Natural killer cell (primary cell): ENCODE measurements at regions of chr9 and their contacts with region 1.

Region 1: GRCh38 chr9:20593551-20593950 is 28.7 kb downstream of the MLLT3 start:
- DNase-seq: no peak
- ATAC-seq: no peak
- H3K4me3 ChIP-seq: no peak overlapping the region
- H3K4me3 Mint-ChIP-seq: no peak overlapping the region
- H3K27ac ChIP-seq: no peak overlapping the region
- H3K27ac Mint-ChIP-seq: no peak overlapping the region
- H3K4me1 ChIP-seq: no peaks in the 10 kb centered on the region
- H3K4me1 Mint-ChIP-seq: peaks cover 32 to 40% of the 10 kb centered on the region in 2 donors
- H3K27me3 ChIP-seq: no peaks in the 10 kb centered on the region
- H3K27me3 Mint-ChIP-seq: no peaks in the 10 kb centered on the region
- CTCF ChIP-seq: no peak

Region 2: DNA sequence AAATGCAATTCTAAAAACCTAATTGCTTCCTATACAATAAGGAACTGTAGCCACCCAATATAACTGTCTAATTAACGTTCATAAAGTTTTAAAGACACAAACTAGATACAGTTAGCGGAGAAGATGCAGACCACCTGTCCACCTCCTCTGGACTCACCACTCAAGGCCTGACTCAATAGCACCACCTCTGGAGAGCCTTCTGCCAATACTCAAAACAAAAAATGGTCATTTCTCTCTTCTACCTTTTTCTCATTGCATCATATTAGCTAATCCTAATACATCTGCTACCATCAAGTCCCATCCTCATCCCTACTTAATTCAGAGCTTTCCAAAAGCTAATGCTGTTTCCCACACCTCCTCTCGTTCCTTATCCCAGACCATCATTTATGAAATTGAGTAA is 131.1 kb before region 1 on chr9:
- intact Hi-C with region 1: loop called (anchors 10 kb)
- DNase-seq: no peak
- ATAC-seq: no peak
- H3K4me3 ChIP-seq: no peak overlapping the region
- H3K4me3 Mint-ChIP-seq: no peak overlapping the region
- H3K27ac ChIP-seq: no peak overlapping the region
- H3K27ac Mint-ChIP-seq: no peak overlapping the region
- H3K4me1 ChIP-seq: no peaks in the 10 kb centered on the region
- H3K4me1 Mint-ChIP-seq: peaks cover 35 to 60% of the 10 kb centered on the region in 2 donors
- H3K27me3 ChIP-seq: no peaks in the 10 kb centered on the region
- H3K27me3 Mint-ChIP-seq: no peaks in the 10 kb centered on the region
- CTCF ChIP-seq: no peak